GM12878 (cell line): ENCODE measurements at regions of chr14 and their contacts with region 1.

Region 1: DNA sequence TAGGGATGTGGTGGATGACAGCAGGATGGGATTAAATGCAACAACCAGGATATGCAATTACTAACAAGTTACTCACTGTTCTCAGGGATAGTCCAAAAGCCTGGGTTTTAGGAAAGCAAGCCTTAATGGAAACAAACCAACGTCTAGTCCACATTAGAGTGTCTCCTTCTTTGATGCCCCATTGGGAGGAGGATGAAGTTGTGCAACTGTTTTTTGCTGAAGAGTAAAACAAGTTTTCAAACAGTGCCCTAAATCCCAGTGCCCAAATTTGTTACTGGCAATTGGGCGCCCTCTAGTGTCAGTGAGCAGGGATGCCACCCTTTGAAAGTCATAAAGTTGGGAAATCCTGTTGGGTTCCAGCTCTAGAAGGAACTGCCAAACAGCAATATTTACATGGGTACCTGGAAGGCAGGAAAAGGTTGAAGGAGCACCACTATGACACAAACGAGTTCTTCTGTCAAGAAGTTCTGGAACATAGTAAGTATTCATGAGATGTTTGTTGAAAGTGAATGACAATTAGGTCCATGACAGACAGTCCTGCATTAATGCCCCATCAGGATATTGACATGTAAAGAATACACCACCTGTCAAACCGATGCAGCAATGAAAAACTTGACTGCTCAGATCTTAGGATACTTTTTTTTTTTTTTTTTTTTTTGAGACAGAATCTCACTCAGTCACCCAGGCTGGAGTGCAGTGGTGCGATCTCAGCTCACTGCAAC is 11.1 kb upstream of the DPF3 start:
- DNase-seq: no peak
- ATAC-seq: peak; percentile 83
- H3K4me3 ChIP-seq: no peak overlapping the region
- H3K27ac ChIP-seq: no peak overlapping the region
- H3K4me1 ChIP-seq: peaks cover 7% of the 10 kb centered on the region; the same call in 1 of the 2 replicates
- H3K27me3 ChIP-seq: no peaks in the 10 kb centered on the region
- CTCF ChIP-seq: peak; percentile 88 to 96 (median 95)
- EP300 ChIP-seq: no peak
- POLR2A ChIP-seq: no peak
- RAD21 ChIP-seq: peak; percentile 99

Region 2: GRCh38 chr14:72863216-72864006 is 41.6 kb before region 1 on chr14:
- CTCF ChIA-PET with region 1: interaction called, 6 read pairs
- POLR2A ChIA-PET with region 1: no interaction called
- RAD21 ChIA-PET with region 1: interaction called, 15 read pairs
- SMC1A ChIA-PET with region 1: interaction called, 15 read pairs
- in situ Hi-C with region 1: no loop called
- intact Hi-C with region 1: no loop called
- DNase-seq: peak; percentile 68
- ATAC-seq: peak; percentile 94
- H3K4me3 ChIP-seq: no peak overlapping the region
- H3K27ac ChIP-seq: no peak overlapping the region
- H3K4me1 ChIP-seq: peaks cover 8% of the 10 kb centered on the region
- H3K27me3 ChIP-seq: no peaks in the 10 kb centered on the region
- CTCF ChIP-seq: peak; percentile 6 to 19 (median 10); a peak in 2 of 6 replicates
- EP300 ChIP-seq: no peak
- POLR2A ChIP-seq: no peak
- RAD21 ChIP-seq: peak; percentile 26; the same call in 1 of the 2 replicates

Region 3: GRCh38 chr14:72888636-72889201 is 16.3 kb before region 1 on chr14:
- CTCF ChIA-PET with region 1: interaction called, 40 read pairs
- POLR2A ChIA-PET with region 1: no interaction called
- RAD21 ChIA-PET with region 1: interaction called, 20 read pairs
- SMC1A ChIA-PET with region 1: interaction called, 25 read pairs
- in situ Hi-C with region 1: no loop called
- intact Hi-C with region 1: no loop called
- DNase-seq: no peak
- ATAC-seq: no peak
- H3K4me3 ChIP-seq: 0 out of 2 replicates have a peak overlapping the region, but pooled peaks have one; percentile 8
- H3K27ac ChIP-seq: no peak overlapping the region
- H3K4me1 ChIP-seq: peaks cover 14% of the 10 kb centered on the region
- H3K27me3 ChIP-seq: no peaks in the 10 kb centered on the region
- CTCF ChIP-seq: no peak
- EP300 ChIP-seq: no peak
- POLR2A ChIP-seq: no peak
- RAD21 ChIP-seq: no peak